Activated T-helper 2 cell treated with anti-CD3 and anti-CD28 coated beads, Interferon-gamma antibody, Interleukin-2, Interleukin-4, amounts not matched to agents 10 μg/mL and 5 μg/mL and 100 μg/mL, durations not matched to agents 14 hours and 24 hours and 36 hours (primary cell): ENCODE measurements at regions of chr6 and their contacts with region 1.

Region 1: DNA sequence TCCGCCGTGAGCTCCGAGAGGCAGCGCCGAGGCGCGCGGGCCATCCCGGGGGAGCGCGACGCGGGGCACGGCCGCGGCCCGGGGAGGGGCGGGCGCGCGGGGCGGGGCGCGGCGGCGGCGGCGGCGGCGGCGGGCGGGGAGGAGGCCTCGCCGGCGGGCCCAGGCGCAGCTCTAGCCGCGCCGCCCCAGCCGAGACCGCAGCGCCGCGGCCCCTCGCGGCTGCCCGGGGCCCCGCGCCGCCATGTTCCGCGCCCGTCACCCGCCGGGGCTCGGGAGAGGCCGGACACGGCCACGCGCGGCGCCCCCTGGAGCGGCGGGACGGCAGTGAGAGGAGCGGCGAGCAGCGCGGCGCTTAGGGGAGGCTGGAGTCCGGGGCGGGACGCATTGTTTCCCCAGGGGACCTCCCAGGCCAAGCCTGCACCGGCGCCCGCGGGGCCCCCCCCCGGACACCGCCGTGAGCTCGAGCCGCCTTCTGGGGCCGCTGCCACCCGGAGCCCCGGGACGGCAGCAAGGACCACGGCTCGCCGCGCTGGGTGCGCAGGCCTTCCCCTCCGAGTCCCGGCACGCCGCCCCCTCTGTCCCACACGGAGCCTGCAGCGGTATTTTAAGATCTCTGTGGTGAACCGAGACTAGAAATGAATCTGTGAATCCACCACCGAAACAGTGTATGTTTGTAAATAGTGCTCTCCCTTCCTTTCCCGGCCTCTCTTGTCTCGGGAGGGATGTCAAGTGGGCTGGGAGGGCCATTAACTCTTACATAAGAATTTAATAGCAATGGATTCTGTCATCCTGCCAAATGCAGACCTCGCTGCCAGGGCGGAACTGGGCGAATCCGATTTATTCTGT is at the start of gene KIF13A:
- DNase-seq: no peak
- H3K4me3 Mint-ChIP-seq: peak within 1 kb of the TSS; percentile 80
- H3K27ac Mint-ChIP-seq: no peak within 1 kb of the TSS
- H3K4me1 Mint-ChIP-seq: peaks cover 5% of the 10 kb centered on the region
- H3K27me3 Mint-ChIP-seq: peaks cover 67% of the 10 kb centered on the region
- total RNA-seq, gene KIF13A: 0.48 TPM in 1 of 2 replicates, not detected in the other

Region 2: DNA sequence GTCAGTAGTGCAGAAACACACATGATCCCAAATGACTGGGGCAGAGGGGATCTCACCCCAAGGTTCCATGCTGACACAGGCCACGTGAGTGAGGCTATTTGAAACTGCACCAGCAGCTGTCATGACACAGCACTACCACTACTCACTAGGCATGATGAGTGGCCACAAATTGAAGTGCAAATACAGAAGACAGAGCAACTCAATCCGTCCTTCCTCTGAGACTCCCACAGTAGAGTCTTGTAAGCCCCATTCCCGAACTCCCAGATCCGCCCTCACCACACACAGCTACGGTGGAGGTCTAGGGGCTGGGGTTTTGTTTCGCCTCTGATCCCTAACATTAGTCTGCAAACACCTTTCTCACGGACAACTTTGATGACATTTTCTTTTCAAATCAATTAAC is 167.7 kb before region 1 on chr6:
- intact Hi-C with region 1: no loop called
- DNase-seq: no peak
- H3K4me3 Mint-ChIP-seq: no peak overlapping the region
- H3K27ac Mint-ChIP-seq: no peak overlapping the region
- H3K4me1 Mint-ChIP-seq: no peaks in the 10 kb centered on the region
- H3K27me3 Mint-ChIP-seq: peaks cover 4% of the 10 kb centered on the region

Region 3: GRCh38 chr6:17957498-17957897 is 30.3 kb before region 1 on chr6:
- intact Hi-C with region 1: no loop called
- DNase-seq: no peak
- H3K4me3 Mint-ChIP-seq: no peak overlapping the region
- H3K27ac Mint-ChIP-seq: no peak overlapping the region
- H3K4me1 Mint-ChIP-seq: peaks cover 4% of the 10 kb centered on the region
- H3K27me3 Mint-ChIP-seq: peaks cover 13% of the 10 kb centered on the region

Region 4: GRCh38 chr6:18115356-18115755 is 127.6 kb after region 1 on chr6:
- intact Hi-C with region 1: loop called (anchors 1 kb)
- DNase-seq: peak; percentile 12
- H3K4me3 Mint-ChIP-seq: no peak overlapping the region
- H3K27ac Mint-ChIP-seq: peak overlapping the region; percentile 24
- H3K4me1 Mint-ChIP-seq: peaks cover 12% of the 10 kb centered on the region
- H3K27me3 Mint-ChIP-seq: peaks cover 60% of the 10 kb centered on the region

Region 5: GRCh38 chr6:18264219-18264922 is 276.6 kb after region 1 on chr6 and contains the start of gene DEK:
- intact Hi-C with region 1: loop called (anchors 5 kb)
- DNase-seq: peak; percentile 82
- H3K4me3 Mint-ChIP-seq: peak within 1 kb of the TSS; percentile 98
- H3K27ac Mint-ChIP-seq: peak within 1 kb of the TSS; percentile 97
- H3K4me1 Mint-ChIP-seq: peaks cover 40% of the 10 kb centered on the region
- H3K27me3 Mint-ChIP-seq: no peaks in the 10 kb centered on the region
- total RNA-seq, gene DEK: 182 and 198 TPM in 2 replicates